ENCODE measurements at regions of chr4 and their contacts with region 1.

Region 1: GRCh38 chr4:108109997-108110416 is 58.7 kb downstream of the LEF1 start:
- DNase-seq: no peak
- H3K4me3 Mint-ChIP-seq: peak overlapping the region; percentile 55
- H3K27ac Mint-ChIP-seq: peak overlapping the region; percentile 96
- H3K4me1 Mint-ChIP-seq: peaks cover 96% of the 10 kb centered on the region
- H3K27me3 Mint-ChIP-seq: no peaks in the 10 kb centered on the region

Region 2: DNA sequence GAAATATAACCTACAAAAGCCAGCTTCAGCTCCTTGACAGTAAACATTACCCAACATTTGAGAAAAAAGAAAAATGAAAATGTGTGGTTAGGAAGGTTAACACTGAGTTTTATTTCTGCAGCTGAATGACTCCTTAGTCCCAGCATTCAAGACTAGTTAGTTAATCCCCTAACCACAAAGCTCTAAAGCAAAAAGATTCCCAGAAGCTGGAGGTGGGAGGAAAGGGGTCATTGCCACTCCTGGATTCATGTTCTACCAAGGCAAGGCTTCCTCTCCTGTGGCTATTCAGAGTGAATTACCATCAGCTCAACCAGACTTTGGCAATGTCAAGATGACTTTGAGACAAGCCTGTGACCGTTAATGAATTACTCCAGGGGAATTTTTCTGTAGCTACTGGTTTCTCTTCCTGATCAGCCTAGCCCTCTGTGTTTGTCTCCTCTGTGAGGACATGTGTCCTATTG is 56.7 kb before region 1 on chr4:
- CTCF ChIA-PET with region 1: interaction called, 5 read pairs
- intact Hi-C with region 1: loop called (anchors 2 kb)
- DNase-seq: no peak
- H3K4me3 Mint-ChIP-seq: peak overlapping the region; percentile 34
- H3K27ac Mint-ChIP-seq: peak overlapping the region; percentile 93
- H3K4me1 Mint-ChIP-seq: peaks cover 94% of the 10 kb centered on the region
- H3K27me3 Mint-ChIP-seq: no peaks in the 10 kb centered on the region

Region 3: DNA sequence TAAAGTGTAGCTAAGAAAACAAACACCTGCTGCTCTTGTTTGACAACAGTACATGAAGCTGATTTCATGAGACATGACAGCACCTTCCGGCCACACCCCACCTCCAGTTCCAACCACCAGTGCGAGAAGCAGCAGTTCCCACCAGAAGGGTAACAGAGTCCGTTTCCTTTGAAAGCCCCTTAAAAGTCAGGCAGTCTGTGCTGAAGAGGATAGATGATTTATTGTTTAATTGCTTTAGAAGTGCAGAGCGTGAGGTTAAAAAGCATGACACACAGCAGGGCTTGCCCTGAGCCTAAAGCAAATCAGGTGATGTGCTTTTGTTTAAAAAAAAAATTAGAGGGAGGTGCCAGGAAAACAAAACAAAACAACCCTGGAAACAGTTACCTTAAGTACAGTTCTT is 37.7 kb before region 1 on chr4:
- CTCF ChIA-PET with region 1: interaction called, 4 read pairs
- intact Hi-C with region 1: loop called (anchors 2 kb)
- DNase-seq: peak; percentile 84
- H3K4me3 Mint-ChIP-seq: peak overlapping the region; percentile 38
- H3K27ac Mint-ChIP-seq: peak overlapping the region; percentile 89
- H3K4me1 Mint-ChIP-seq: peaks cover 84% of the 10 kb centered on the region
- H3K27me3 Mint-ChIP-seq: no peaks in the 10 kb centered on the region

Region 4: GRCh38 chr4:108080747-108081146 is 29.3 kb before region 1 on chr4:
- CTCF ChIA-PET with region 1: interaction called, 4 read pairs
- intact Hi-C with region 1: loop called (anchors 1 kb)
- DNase-seq: peak; percentile 73
- H3K4me3 Mint-ChIP-seq: peak overlapping the region; percentile 74
- H3K27ac Mint-ChIP-seq: peak overlapping the region; percentile 93
- H3K4me1 Mint-ChIP-seq: peaks cover 79% of the 10 kb centered on the region
- H3K27me3 Mint-ChIP-seq: no peaks in the 10 kb centered on the region

Region 5: GRCh38 chr4:108094923-108095482 is 15.0 kb before region 1 on chr4:
- CTCF ChIA-PET with region 1: interaction called, 14 read pairs
- intact Hi-C with region 1: loop called (anchors 1 kb)
- DNase-seq: no peak
- H3K4me3 Mint-ChIP-seq: peak overlapping the region; percentile 11
- H3K27ac Mint-ChIP-seq: peak overlapping the region; percentile 96
- H3K4me1 Mint-ChIP-seq: peaks cover 86% of the 10 kb centered on the region
- H3K27me3 Mint-ChIP-seq: no peaks in the 10 kb centered on the region

Region 6: DNA sequence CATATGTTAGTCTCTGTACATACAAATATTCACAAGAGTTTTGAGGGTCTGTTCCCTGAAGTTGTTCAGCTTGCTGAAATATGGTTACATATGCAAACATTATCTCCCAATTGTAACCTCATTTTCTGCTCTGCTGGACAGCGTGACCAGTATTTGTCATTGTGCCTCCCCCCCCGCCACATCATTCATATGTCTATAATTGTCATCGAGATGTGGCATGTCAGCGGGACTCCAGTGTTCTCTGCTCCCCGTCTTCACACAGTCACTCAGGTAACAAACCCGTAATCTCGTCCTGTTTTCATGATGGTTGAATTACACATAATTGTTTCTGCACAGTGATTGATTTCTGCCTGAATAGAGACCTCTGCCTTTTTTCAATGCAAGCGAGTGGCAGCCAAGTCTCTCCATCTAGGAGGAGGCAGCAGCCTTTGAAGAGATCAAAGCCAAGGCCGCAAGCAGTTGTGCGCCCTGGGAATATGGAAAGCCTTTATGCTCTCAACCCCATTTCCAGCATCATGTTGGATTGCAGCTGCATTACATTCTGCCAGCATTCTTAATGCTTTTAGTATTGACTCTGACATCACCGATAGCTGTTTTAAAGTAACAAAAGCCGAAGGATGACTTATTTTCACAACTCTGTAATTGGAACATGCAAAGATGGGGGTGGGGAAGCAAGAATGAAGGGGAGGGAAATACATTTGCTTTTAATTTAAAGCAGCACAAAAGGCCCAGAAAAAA is 31.4 kb after region 1 on chr4:
- CTCF ChIA-PET with region 1: interaction called, 28 read pairs
- intact Hi-C with region 1: loop called (anchors 1 kb)
- DNase-seq: peak; percentile 72
- H3K4me3 Mint-ChIP-seq: peak overlapping the region; percentile 77
- H3K27ac Mint-ChIP-seq: peak overlapping the region; percentile 99
- H3K4me1 Mint-ChIP-seq: peaks cover 89% of the 10 kb centered on the region
- H3K27me3 Mint-ChIP-seq: no peaks in the 10 kb centered on the region

Region 7: GRCh38 chr4:108148316-108148715 is 38.3 kb after region 1 on chr4:
- CTCF ChIA-PET with region 1: interaction called, 6 read pairs
- intact Hi-C with region 1: loop called (anchors 1 kb)
- DNase-seq: peak; percentile 77
- H3K4me3 Mint-ChIP-seq: peak overlapping the region; percentile 53
- H3K27ac Mint-ChIP-seq: peak overlapping the region; percentile 99
- H3K4me1 Mint-ChIP-seq: peaks cover 91% of the 10 kb centered on the region
- H3K27me3 Mint-ChIP-seq: no peaks in the 10 kb centered on the region

Region 8: GRCh38 chr4:109233585-109233984 is 1123.6 kb after region 1 on chr4:
- CTCF ChIA-PET with region 1: no interaction called
- intact Hi-C with region 1: no loop called
- DNase-seq: no peak
- H3K4me3 Mint-ChIP-seq: no peak overlapping the region
- H3K27ac Mint-ChIP-seq: no peak overlapping the region
- H3K4me1 Mint-ChIP-seq: no peaks in the 10 kb centered on the region
- H3K27me3 Mint-ChIP-seq: no peaks in the 10 kb centered on the region

Measured in activated naive CD4-positive, alpha-beta T cell treated with anti-CD3 and anti-CD28 coated beads for 36 hours (primary cell).